Endothelial cell of umbilical vein (primary cell): ENCODE measurements at regions of chr2 and their contacts with region 1.

Region 1: DNA sequence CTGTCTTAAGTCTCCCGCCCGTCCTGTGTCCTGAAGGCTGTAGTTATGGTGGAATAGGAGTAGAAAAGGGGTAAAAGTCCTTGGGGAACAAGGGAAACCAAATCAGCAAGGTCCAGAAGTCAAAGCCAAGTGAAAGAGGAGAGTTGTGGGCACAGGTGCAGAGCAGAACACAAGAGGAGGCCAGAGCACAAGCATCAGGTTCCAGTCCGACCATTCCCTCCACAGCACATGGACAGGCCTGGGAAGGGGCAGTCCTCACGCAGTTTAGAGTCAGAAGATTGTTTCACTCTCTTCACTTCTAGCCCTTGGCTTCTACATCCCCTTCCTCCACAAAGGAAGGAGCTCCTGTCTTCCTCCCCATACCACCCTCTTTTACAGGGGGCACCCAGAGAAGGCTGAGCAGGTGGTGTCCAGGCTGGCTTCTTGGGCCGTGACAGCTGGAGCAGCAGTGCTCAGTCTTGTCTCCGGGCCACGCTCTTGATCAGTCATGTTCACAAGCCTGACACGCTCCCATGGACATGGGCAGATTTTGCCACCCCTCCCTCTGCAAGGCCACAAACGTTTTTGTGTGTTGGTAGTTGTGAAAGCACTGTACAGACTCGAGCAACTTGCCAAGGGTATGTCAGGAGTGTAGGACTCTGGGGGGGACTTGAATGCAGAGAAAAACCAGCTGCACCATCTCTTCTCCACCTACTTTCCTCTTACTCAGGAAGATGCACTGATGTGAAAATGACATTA is 138.5 kb upstream of the DAPL1 start:
- DNase-seq: no peak
- H3K4me3 ChIP-seq: no peak overlapping the region
- H3K27ac ChIP-seq: no peak overlapping the region
- H3K4me1 ChIP-seq: no peaks in the 10 kb centered on the region
- H3K27me3 ChIP-seq: no peaks in the 10 kb centered on the region
- CTCF ChIP-seq: no peak
- POLR2A ChIP-seq: no peak

Region 2: DNA sequence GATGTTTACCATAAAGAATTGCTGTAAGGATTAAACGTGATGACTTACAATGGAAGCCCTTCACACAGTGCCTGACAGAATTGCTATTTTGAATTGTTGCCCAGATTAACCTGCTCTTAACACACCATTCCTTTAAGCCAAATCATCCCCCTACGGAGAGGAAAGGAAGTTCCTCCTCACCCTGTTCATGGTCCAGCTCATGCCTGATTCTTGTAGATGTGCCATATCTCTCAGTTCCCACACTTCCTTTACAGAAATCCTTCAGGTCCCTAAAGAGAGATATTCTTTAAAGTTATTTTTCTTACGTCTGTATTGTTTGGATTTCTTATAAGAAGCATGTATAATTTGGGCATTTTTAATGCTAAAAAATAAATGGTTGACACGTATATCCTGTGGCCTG is 10.9 kb after region 1 on chr2:
- CTCF ChIA-PET with region 1: interaction called, 11 read pairs
- POLR2A ChIA-PET with region 1: no interaction called
- dilution Hi-C with region 1: no loop called
- intact Hi-C with region 1: no loop called
- DNase-seq: peak; percentile 97
- H3K4me3 ChIP-seq: peak overlapping the region in 1 of 3 experiments; percentile 30
- H3K27ac ChIP-seq: peak overlapping the region; percentile 82
- H3K4me1 ChIP-seq: peaks cover 34% of the 10 kb centered on the region
- H3K27me3 ChIP-seq: no peaks in the 10 kb centered on the region
- CTCF ChIP-seq: no peak
- POLR2A ChIP-seq: peak; percentile 61